AG04450 (cell line): ENCODE measurements at regions of chr6 and their contacts with region 1.

Region 1: GRCh38 chr6:49531774-49532569 is 18.5 kb upstream of the C6orf141 start:
- DNase-seq: peak; percentile 15
- H3K4me3 ChIP-seq: no peak overlapping the region
- H3K27ac ChIP-seq: no peak overlapping the region
- H3K27me3 ChIP-seq: no peaks in the 10 kb centered on the region
- CTCF ChIP-seq: peak; percentile 91

Region 2: DNA sequence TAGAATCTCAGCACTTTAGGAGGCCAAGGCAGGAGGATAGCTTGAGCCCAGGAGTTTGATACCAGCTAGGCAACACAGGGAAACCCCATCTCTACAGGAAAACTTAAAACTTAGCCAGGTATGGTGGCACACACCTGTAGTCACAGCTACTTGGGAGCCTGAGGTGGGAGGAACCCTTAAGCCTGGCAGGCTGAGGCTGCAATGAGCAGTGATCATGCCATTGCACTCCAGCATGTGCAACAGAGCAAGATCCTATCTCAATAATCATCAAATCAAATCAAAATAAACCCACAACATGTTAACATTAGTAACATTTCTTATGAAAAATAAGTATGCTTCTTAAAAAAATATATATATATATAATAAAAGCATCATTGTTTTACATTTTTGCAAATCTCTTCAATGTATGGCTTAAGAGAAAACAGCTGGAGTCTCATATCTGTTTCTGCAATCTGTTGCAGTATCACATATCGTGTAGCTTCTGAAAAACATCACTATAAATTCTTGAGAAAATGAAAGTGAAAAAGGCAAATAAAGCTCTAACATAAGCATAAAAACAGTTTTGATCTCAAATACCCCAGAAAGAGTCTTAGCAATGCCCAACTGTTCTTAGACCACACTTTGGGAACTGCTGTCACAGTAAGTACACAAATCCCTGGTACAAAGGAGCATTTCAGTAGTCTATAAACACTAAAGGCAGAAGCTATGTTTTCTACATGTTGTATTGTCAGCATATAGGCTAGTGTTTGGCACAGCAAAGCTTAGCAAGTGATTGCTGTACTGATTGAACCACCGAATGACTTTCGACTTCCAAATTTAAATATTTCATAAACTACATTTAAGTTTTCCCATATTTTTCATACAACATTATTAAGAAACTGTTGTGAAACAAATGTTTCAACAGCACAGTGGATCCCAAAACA is 76.9 kb before region 1 on chr6:
- CTCF ChIA-PET with region 1: no interaction called
- POLR2A ChIA-PET with region 1: no interaction called
- DNase-seq: no peak
- H3K4me3 ChIP-seq: no peak overlapping the region
- H3K27ac ChIP-seq: no peak overlapping the region
- H3K27me3 ChIP-seq: no peaks in the 10 kb centered on the region
- CTCF ChIP-seq: no peak

Region 3: DNA sequence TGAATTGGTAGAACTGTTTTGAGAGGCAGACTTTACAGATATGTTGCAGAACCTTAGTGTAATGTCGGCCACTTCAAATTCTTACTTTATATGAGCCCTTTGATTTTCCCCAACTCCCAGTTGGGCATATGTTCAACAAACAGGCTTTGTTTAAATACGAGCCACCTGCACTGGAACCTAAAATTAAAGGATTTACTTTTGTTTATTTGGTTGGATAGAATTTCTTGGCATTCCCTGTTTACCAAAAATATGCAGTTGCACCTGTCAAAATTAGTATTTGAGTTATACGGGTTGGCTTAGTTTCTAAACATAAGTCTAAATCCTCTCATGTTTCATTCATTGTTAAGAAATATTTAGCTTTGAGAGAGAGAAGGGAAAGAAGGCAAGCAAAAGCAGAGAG is 34.7 kb before region 1 on chr6:
- CTCF ChIA-PET with region 1: interaction called, 14 read pairs
- POLR2A ChIA-PET with region 1: no interaction called
- DNase-seq: no peak
- H3K4me3 ChIP-seq: no peak overlapping the region
- H3K27ac ChIP-seq: no peak overlapping the region
- H3K27me3 ChIP-seq: no peaks in the 10 kb centered on the region
- CTCF ChIP-seq: no peak

Region 4: DNA sequence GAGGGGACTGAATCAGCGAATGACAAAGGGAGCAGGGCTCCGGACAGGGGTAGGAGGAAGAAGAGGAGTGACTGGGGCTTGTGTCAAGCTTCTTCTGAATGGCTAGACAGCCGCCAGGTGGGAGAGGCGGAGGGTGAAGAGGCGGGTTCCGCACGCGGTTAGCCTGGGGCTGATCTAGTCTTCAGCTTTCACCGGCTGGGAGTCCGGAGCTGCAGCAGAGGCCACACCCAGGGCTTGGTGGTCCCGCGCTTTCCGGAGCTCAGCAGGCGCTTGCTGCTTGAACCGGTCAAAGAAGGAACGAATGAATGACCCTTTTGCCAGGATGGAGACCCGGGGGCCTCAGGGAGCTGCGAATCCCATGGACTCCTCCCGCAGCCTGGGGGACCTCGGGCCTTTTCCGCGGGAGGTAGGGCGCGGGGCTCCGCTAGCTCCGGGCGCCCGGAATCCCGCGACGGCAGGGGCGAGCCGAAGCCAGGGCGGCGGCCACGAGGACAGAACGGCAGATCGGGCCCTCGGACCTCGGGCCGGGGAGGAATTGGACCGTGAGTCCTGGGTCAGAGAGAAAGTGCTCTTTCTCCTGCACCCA is 18.6 kb after region 1 on chr6 and contains the start of gene C6orf141:
- CTCF ChIA-PET with region 1: interaction called, 177 read pairs
- POLR2A ChIA-PET with region 1: no interaction called
- DNase-seq: no peak
- H3K4me3 ChIP-seq: peak within 1 kb of the TSS; percentile 43
- H3K27ac ChIP-seq: no peak within 1 kb of the TSS
- H3K27me3 ChIP-seq: peaks cover 16% of the 10 kb centered on the region
- CTCF ChIP-seq: no peak
- polyA plus RNA-seq, gene C6orf141: not detected in 2 replicates

Region 5: GRCh38 chr6:49570474-49571079 is 38.6 kb after region 1 on chr6:
- CTCF ChIA-PET with region 1: interaction called, 27 read pairs
- POLR2A ChIA-PET with region 1: no interaction called
- DNase-seq: no peak
- H3K4me3 ChIP-seq: no peak overlapping the region
- H3K27ac ChIP-seq: no peak overlapping the region
- H3K27me3 ChIP-seq: peaks cover 2% of the 10 kb centered on the region
- CTCF ChIP-seq: peak; percentile 19; the same call in 1 of the 2 replicates

Region 6: GRCh38 chr6:49625140-49625539 is 93.2 kb after region 1 on chr6:
- CTCF ChIA-PET with region 1: interaction called, 35 read pairs
- POLR2A ChIA-PET with region 1: no interaction called
- DNase-seq: no peak
- H3K4me3 ChIP-seq: no peak overlapping the region
- H3K27ac ChIP-seq: no peak overlapping the region
- H3K27me3 ChIP-seq: no peaks in the 10 kb centered on the region
- CTCF ChIP-seq: no peak